Vagina (tissue), 2 donors: ENCODE measurements at regions of chr20 and their contacts with region 1.

Region 1: DNA sequence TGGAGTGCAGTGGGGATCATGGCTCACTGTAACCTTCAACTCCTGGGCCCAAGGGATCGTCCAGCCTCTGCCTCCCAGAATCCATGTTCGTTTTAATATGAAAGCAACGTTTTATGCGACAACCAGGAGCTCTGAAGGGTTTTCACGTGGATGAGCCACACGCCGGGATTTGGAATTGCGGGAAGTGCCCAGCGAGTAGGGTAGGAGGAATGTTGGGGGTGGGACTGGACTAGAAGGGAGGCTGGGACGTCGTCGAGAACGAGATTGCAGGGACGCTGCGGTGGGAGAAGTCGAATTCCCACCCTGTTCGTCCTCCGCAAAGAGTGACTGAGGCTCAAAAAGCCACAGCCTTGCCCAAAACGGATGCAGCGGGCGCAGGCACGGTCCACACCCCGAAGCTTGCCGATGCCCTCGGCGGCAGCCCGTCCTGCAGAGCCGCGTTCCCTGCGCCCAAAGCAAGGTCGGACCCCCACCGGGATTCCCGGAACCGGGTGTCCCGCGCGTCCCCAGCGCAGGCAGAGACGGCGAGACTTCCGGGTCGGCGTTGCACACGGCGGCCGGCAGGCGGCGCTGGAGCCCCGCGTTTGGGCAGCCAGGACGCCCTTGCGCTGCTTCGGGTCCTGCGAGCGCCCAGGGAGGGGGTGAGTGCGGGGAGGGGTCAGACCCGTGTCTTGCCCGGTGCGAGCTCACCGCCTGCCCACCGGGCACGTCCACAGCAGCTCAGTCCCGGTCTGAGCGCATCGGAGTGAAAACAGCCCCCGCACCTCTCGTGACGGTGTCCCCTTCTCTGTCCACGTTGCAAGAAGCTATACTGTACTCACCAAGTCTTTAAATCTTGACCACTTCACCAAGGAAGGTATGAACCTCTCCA is 87.8 kb downstream of the DHX35 start:
- DNase-seq: no peak
- H3K4me3 ChIP-seq: peak overlapping the region; percentile 54 to 66
- H3K27ac ChIP-seq: peak overlapping the region; percentile 74
- H3K4me1 ChIP-seq: peaks cover 12% of the 10 kb centered on the region
- H3K27me3 ChIP-seq: no peaks in the 10 kb centered on the region
- CTCF ChIP-seq: peak; percentile 90 to 100 (median 95)
- POLR2A ChIP-seq: no peak

Region 2: GRCh38 chr20:38926142-38926933 is 123.6 kb before region 1 on chr20 and contains the start of gene FAM83D:
- intact Hi-C with region 1: loop called (anchors 5 kb)
- DNase-seq: no peak
- H3K4me3 ChIP-seq: peak within 1 kb of the TSS; percentile 58 to 63
- H3K27ac ChIP-seq: peak within 1 kb of the TSS; percentile 22
- H3K4me1 ChIP-seq: peaks cover 20% of the 10 kb centered on the region
- H3K27me3 ChIP-seq: no peaks in the 10 kb centered on the region
- CTCF ChIP-seq: peak in 1 of 3 experiments; percentile 66
- POLR2A ChIP-seq: peak in 1 of 2 donors; percentile 31
- total RNA-seq, gene FAM83D: 20.4 TPM

Region 3: GRCh38 chr20:38985603-38986170 is 64.2 kb before region 1 on chr20:
- intact Hi-C with region 1: loop called (anchors 10 kb)
- DNase-seq: no peak
- H3K4me3 ChIP-seq: no peak overlapping the region
- H3K27ac ChIP-seq: peak overlapping the region; percentile 42
- H3K4me1 ChIP-seq: peaks cover 20% of the 10 kb centered on the region
- H3K27me3 ChIP-seq: no peaks in the 10 kb centered on the region
- CTCF ChIP-seq: no peak
- POLR2A ChIP-seq: no peak